Activated T-helper 1 cell treated with anti-CD3 and anti-CD28 coated beads, Interleukin-12 subunit alpha, Interleukin-12 subunit beta, Interleukin-2, Interleukin-4 antibody, amounts not matched to agents 30 ng/mL and 10 ng/mL and 1 ng/mL, durations not matched to agents 14 hours and 24 hours and 36 hours (primary cell): ENCODE measurements at regions of chrX and their contacts with region 1.

Region 1: GRCh38 chrX:136616987-136617685 is 30.8 kb upstream of the CD40LG start:
- DNase-seq: no peak
- H3K4me3 Mint-ChIP-seq: peak overlapping the region; percentile 47
- H3K27ac Mint-ChIP-seq: peak overlapping the region; percentile 85
- H3K4me1 Mint-ChIP-seq: peaks cover 53% of the 10 kb centered on the region
- H3K27me3 Mint-ChIP-seq: no peaks in the 10 kb centered on the region

Region 2: DNA sequence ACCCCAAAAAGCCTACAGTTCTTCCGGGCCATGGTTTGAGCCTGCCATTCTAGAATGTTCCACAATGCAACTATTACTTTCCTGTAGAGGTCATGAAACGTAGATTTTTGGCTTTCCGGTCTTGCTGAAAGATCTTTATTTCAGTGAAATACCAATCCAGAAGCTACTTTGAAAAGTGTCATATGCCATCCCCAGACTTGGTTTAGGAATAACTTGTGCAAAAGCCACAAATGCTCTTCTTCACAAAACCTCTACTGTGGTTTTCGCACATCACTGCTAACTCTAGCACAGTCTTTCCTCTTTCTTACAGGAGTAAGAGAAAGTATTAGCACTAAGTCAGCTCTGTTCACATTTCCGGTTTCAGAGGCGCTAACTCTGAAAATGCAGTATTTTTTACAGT is 18.1 kb after region 1 on chrX:
- intact Hi-C with region 1: loop called (anchors 1 kb)
- DNase-seq: no peak
- H3K4me3 Mint-ChIP-seq: peak overlapping the region; percentile 74
- H3K27ac Mint-ChIP-seq: peak overlapping the region; percentile 89
- H3K4me1 Mint-ChIP-seq: peaks cover 83% of the 10 kb centered on the region
- H3K27me3 Mint-ChIP-seq: no peaks in the 10 kb centered on the region